H1 (cell line): ENCODE measurements at regions of chr2 and their contacts with region 1.

Region 1: GRCh38 chr2:121888200-121888579 is 132.7 kb downstream of the TSN start:
- DNase-seq: peak in 1 of 2 experiments; percentile 86
- H3K4me3 ChIP-seq: no peak overlapping the region
- H3K27ac ChIP-seq: no peak overlapping the region
- H3K4me1 ChIP-seq: 0 out of 7 replicates have a peak, but pooled peaks cover 0 to 3% (median 0%) of the 10 kb centered on the region in 4 experiments
- H3K27me3 ChIP-seq: peaks cover 0 to 3% (median 1%) of the 10 kb centered on the region in 4 experiments; a peak in 3 of 7 replicates
- CTCF ChIP-seq: peak; percentile 50 to 78 (median 70)
- EP300 ChIP-seq: no peak
- POLR2A ChIP-seq: no peak
- RAD21 ChIP-seq: peak; percentile 39 to 50

Region 2: GRCh38 chr2:121907928-121908327 is 19.7 kb after region 1 on chr2:
- CTCF ChIA-PET with region 1: interaction called, 94 read pairs
- POLR2A ChIA-PET with region 1: no interaction called
- DNase-seq: no peak
- H3K4me3 ChIP-seq: no peak overlapping the region
- H3K27ac ChIP-seq: no peak overlapping the region
- H3K4me1 ChIP-seq: no peaks in the 10 kb centered on the region; a peak in 1 of 7 replicates
- H3K27me3 ChIP-seq: no peaks in the 10 kb centered on the region
- CTCF ChIP-seq: no peak
- EP300 ChIP-seq: no peak
- POLR2A ChIP-seq: no peak
- RAD21 ChIP-seq: no peak

Region 3: DNA sequence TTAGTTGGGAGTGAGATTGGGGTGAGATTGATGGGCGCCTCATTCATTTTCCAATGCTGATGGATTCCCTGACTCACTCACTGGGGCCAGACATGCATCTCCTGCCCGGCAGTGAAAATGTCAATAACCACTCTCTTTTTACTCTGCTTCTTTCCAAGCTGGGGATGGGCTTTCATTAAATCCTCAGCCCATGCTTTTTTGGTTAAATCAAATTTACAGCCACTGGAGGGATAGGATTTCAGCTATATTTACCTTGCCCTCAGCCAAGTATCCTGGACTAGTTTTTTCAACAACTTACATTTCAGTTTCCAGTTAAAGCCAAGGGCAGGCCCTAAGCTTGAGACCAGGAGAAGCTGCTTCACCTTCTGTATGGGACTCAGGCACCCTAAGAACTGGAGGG is 30.0 kb after region 1 on chr2:
- CTCF ChIA-PET with region 1: interaction called, 15 read pairs
- POLR2A ChIA-PET with region 1: no interaction called
- DNase-seq: no peak
- H3K4me3 ChIP-seq: no peak overlapping the region
- H3K27ac ChIP-seq: no peak overlapping the region
- H3K4me1 ChIP-seq: no peaks in the 10 kb centered on the region
- H3K27me3 ChIP-seq: no peaks in the 10 kb centered on the region
- CTCF ChIP-seq: no peak
- EP300 ChIP-seq: no peak
- POLR2A ChIP-seq: no peak
- RAD21 ChIP-seq: no peak